ENCODE measurements at regions of chr14 and their contacts with region 1.

Region 1: GRCh38 chr14:70663611-70664508 is 22.1 kb downstream of the TTC9 start:
- DNase-seq: no peak
- H3K4me3 Mint-ChIP-seq: no peak overlapping the region
- H3K27ac Mint-ChIP-seq: no peak overlapping the region
- H3K4me1 Mint-ChIP-seq: peaks cover 63% of the 10 kb centered on the region
- H3K27me3 Mint-ChIP-seq: no peaks in the 10 kb centered on the region
- CTCF ChIP-seq: no peak

Region 2: DNA sequence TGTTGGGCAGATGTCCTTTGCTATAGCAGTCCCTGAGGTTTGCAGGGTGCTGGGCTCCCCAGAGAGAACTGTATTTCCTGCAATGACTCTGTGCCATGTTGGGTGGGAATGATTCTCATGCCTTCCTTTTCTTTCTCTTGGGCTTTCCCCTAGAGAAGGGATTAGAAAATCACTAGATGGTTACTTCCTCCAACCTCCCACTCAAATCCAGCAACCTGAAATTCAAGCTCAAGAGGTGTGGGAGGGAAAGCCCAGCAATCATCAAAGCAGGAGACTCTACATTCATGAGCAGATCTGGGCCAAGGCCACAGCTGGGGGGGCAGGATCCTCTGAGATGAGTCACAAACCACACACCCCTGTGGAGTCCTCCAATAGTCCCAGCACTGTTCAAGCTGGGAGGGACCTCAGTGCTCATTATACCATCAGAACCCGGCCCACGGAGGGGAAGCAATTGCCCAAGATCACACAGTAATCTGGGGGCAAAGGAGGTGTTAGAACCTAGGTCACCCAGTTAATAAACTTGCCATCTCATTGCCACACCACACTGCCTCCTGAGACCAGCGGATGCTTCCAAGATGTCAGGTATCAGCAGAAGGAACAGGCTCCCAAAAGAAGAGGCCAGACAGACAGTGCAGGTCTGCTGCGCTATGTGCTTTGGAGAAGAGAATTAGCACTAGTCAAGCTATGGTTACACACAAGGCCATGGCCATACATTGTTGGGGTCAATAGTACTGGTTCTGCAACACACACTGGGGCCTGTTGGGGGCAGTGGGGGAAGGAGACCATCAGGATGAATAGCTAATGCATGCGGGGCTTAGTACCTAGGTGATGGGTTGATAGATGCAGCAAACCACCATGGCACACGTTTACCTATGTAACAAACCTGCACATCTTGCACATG is 43.5 kb after region 1 on chr14:
- CTCF ChIA-PET with region 1: interaction called, 5 read pairs
- intact Hi-C with region 1: loop called (anchors 5 kb)
- DNase-seq: peak; percentile 81
- H3K4me3 Mint-ChIP-seq: no peak overlapping the region
- H3K27ac Mint-ChIP-seq: peak overlapping the region; percentile 22
- H3K4me1 Mint-ChIP-seq: peaks cover 23% of the 10 kb centered on the region
- H3K27me3 Mint-ChIP-seq: no peaks in the 10 kb centered on the region
- CTCF ChIP-seq: no peak